Dendritic cell treated with granulocyte-macrophage colony-stimulating factor and Interleukin-4, amounts not matched to agents 40 ng/mL and 50 ng/mL, for 4 days (primary cell): ENCODE measurements at regions of chr3 and their contacts with region 1.

Region 1: DNA sequence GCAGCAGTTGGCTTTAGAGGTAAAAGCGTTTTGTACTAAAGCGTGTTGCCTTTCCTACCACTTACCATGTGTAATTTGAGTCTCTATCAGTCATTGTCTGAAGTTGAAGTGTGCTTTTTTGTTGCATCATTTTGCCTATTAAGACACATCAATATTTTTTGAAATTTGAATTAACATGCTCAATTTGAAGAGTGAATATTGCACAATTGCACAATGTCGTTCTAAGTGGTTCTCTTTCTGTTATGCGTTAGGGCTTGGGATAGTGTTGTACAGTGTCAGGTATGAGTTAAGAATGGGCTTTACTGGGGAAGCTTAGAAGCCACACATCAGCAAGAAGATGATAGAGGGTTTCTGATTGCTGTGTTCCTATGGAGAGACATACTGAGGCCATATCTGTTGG is 84.0 kb upstream of the ACKR4 start:
- H3K4me3 Mint-ChIP-seq: no peak overlapping the region
- H3K27ac Mint-ChIP-seq: no peak overlapping the region
- H3K4me1 Mint-ChIP-seq: no peaks in the 10 kb centered on the region
- H3K27me3 Mint-ChIP-seq: no peaks in the 10 kb centered on the region

Region 2: GRCh38 chr3:132549890-132550578 is 37.0 kb after region 1 on chr3:
- intact Hi-C with region 1: no loop called
- H3K4me3 Mint-ChIP-seq: no peak overlapping the region
- H3K27ac Mint-ChIP-seq: no peak overlapping the region
- H3K4me1 Mint-ChIP-seq: peaks cover 24% of the 10 kb centered on the region
- H3K27me3 Mint-ChIP-seq: no peaks in the 10 kb centered on the region

Region 3: GRCh38 chr3:132682201-132682600 is 169.1 kb after region 1 on chr3:
- intact Hi-C with region 1: loop called (anchors 5 kb)
- H3K4me3 Mint-ChIP-seq: no peak overlapping the region
- H3K27ac Mint-ChIP-seq: no peak overlapping the region
- H3K4me1 Mint-ChIP-seq: no peaks in the 10 kb centered on the region
- H3K27me3 Mint-ChIP-seq: no peaks in the 10 kb centered on the region

Region 4: GRCh38 chr3:132722164-132723024 is 209.3 kb after region 1 on chr3 and contains the start of gene NPHP3:
- intact Hi-C with region 1: no loop called
- H3K4me3 Mint-ChIP-seq: peak within 1 kb of the TSS; percentile 89
- H3K27ac Mint-ChIP-seq: peak within 1 kb of the TSS; percentile 86
- H3K4me1 Mint-ChIP-seq: peaks cover 33% of the 10 kb centered on the region
- H3K27me3 Mint-ChIP-seq: no peaks in the 10 kb centered on the region